ENCODE measurements at regions of chr15 and their contacts with region 1.

Region 1: DNA sequence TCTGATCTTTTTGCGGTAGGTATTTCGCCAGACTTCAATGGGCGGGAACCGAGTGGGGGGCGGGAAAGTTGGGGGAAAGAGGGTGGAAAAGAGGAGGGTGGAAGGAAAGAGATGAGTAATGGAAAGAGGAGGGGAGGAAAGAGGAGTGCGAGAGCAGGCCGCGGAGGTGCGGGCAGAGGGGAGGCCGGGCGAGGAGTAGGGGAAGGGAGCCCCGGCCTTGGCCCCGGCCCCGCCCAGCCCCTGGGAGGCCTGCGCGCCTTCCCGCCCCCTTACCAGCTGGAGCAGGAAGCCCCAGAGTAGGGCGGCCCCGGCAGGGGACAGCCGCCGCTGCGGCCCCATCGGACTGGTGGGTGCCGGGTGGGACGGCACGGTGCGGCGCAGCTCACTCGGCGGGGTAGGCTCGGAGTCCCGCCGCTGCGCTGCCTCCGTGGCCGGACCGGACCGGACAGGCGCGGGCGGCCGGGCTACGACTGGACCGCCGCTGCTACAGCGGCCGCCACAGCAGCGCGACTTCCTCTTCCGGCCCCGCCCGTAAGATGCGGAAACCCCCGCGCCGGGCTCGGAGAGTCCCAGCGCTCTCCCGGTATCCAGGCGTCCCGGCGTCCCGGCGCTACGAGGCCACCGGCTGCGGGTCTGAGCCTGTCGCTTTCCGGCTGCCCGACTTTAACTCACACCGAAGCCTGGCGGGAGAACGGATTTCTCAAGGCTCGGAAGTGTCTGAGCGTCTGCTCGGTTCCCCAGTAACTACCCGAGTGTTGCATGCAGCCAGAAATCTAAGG is at the start of gene SPPL2A:
- DNase-seq: peak; percentile 93 to 94
- ATAC-seq: peak; percentile 94
- H3K4me3 ChIP-seq: peak within 1 kb of the TSS; percentile 77 to 81
- H3K27ac ChIP-seq: peak within 1 kb of the TSS; percentile 71 to 91
- H3K4me1 ChIP-seq: peaks cover 0 to 2% of the 10 kb centered on the region in 2 donors
- H3K27me3 ChIP-seq: no peaks in the 10 kb centered on the region
- total RNA-seq, gene SPPL2A: 124 to 130 TPM

Region 2: GRCh38 chr15:50415749-50416404 is 349.5 kb before region 1 on chr15:
- intact Hi-C with region 1: no loop called
- DNase-seq: no peak
- ATAC-seq: no peak
- H3K4me3 ChIP-seq: no peak overlapping the region
- H3K27ac ChIP-seq: no peak overlapping the region
- H3K4me1 ChIP-seq: no peaks in the 10 kb centered on the region
- H3K27me3 ChIP-seq: no peaks in the 10 kb centered on the region

Region 3: DNA sequence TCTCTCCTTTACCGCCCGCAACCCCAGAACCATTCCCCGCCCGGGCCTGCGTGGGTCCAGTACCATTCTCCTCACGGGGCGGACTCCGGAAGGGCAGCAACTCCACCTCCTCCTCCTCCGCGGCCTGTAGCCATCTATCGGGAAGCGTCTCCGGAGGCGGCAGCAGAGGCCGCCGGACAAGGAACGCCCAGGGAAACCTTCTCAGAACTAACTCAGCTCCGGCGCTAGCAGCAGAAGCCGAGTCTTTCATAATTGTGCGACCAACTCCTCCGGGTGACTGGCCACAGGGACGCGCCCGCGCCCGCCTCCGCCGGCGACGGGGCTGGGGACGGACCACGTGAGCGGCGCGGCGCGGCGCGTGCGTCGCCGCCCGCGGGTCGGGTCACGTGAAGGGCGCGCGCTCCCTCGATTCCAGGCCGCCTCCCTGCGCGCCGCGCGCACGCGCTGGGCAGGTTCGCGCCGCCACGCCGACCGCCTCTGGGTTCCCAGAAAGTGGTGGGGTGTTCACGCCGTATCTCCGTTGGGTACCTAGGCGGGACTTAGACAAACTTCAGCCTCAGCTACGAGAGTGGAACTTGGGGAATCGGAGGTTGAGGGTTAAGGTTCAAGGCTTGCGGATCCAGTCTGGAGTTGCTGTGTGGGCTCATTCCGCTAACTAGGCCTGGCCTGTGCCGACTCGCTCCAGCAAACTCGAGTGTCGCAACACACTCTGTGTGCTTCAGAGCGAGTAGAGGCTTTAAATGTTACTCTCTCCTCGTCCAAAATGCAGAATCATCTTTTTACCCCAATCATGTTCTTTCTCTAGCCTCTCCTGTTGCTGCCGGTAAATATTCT is 78.7 kb before region 1 on chr15 and contains the start of gene TRPM7:
- intact Hi-C with region 1: loop called in 1 of 2 experiments (anchors 5 kb)
- DNase-seq: peak; percentile 94 to 96
- ATAC-seq: peak; percentile 97
- H3K4me3 ChIP-seq: peak within 1 kb of the TSS; percentile 80 to 85
- H3K27ac ChIP-seq: peak within 1 kb of the TSS; percentile 93 to 94
- H3K4me1 ChIP-seq: no peaks in the 10 kb centered on the region
- H3K27me3 ChIP-seq: no peaks in the 10 kb centered on the region
- total RNA-seq, gene TRPM7: 41.0 to 57.1 TPM

Region 4: GRCh38 chr15:50819344-50819743 is 54.0 kb after region 1 on chr15:
- intact Hi-C with region 1: loop called in 1 of 2 experiments (anchors 5 kb)
- DNase-seq: no peak
- ATAC-seq: no peak
- H3K4me3 ChIP-seq: no peak overlapping the region
- H3K27ac ChIP-seq: no peak overlapping the region
- H3K4me1 ChIP-seq: no peaks in the 10 kb centered on the region
- H3K27me3 ChIP-seq: no peaks in the 10 kb centered on the region

Region 5: DNA sequence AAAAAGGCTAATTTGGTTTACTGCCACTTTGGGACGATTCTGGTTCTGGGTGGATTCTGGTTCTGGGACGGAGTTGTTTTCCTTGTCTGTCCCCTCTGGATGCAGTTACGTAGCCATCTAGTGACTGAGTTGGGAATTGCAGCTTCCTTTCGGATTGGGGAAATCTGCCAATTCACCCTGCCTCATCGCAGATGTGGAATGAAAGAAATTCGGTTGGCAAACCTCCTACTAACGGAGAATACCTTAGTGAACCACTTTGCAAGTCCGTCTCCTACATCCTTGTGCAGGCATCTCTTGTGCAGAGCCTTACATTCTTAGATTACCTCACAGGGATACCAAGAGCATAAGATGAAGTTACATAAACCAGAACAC is 111.6 kb after region 1 on chr15:
- intact Hi-C with region 1: loop called in 1 of 2 experiments (anchors 5 kb)
- DNase-seq: peak in 1 of 2 donors; percentile 71
- ATAC-seq: peak; percentile 90
- H3K4me3 ChIP-seq: peak overlapping the region; percentile 51 to 53
- H3K27ac ChIP-seq: no peak overlapping the region
- H3K4me1 ChIP-seq: no peaks in the 10 kb centered on the region
- H3K27me3 ChIP-seq: no peaks in the 10 kb centered on the region